ENCODE measurements at regions of chr12 and their contacts with region 1.

Region 1: GRCh38 chr12:39237004-39237403 is 205.9 kb downstream of the KIF21A start:
- DNase-seq: peak in 1 of 2 experiments; percentile 49
- H3K4me3 ChIP-seq: no peak overlapping the region
- H3K4me3 Mint-ChIP-seq: no peak overlapping the region
- H3K27ac Mint-ChIP-seq: no peak overlapping the region
- H3K4me1 ChIP-seq: peaks cover 52% of the 10 kb centered on the region
- H3K4me1 Mint-ChIP-seq: peaks cover 29% of the 10 kb centered on the region
- H3K27me3 ChIP-seq: no peaks in the 10 kb centered on the region
- H3K27me3 Mint-ChIP-seq: no peaks in the 10 kb centered on the region
- CTCF ChIP-seq: no peak

Region 2: DNA sequence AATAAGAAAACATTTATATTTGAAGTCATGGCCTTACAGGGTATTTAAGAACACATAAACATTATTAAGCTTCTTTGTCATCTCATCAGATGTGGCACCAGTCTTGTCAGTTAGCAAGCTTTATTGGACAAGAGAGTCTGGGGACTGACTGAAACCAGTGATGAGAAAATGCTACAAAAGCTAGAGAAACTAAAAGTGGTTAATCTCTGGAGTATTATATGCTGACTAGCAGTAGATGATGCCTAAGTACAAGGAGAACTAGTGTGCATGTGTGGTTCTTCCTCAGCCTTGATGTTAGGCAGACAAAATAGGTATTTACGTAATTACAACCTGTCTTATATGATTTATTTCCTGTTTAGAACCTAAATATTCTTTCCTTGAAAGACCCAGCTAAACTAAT is 508.1 kb before region 1 on chr12:
- CTCF ChIA-PET with region 1: no interaction called
- POLR2A ChIA-PET with region 1: no interaction called
- intact Hi-C with region 1: no loop called
- DNase-seq: no peak
- H3K4me3 ChIP-seq: no peak overlapping the region
- H3K4me3 Mint-ChIP-seq: no peak overlapping the region
- H3K27ac Mint-ChIP-seq: no peak overlapping the region
- H3K4me1 ChIP-seq: no peaks in the 10 kb centered on the region
- H3K4me1 Mint-ChIP-seq: no peaks in the 10 kb centered on the region
- H3K27me3 ChIP-seq: no peaks in the 10 kb centered on the region
- H3K27me3 Mint-ChIP-seq: no peaks in the 10 kb centered on the region
- CTCF ChIP-seq: no peak

Region 3: GRCh38 chr12:38892090-38892786 is 344.8 kb before region 1 on chr12:
- CTCF ChIA-PET with region 1: no interaction called
- POLR2A ChIA-PET with region 1: no interaction called
- intact Hi-C with region 1: loop called (anchors 5 kb)
- DNase-seq: peak; percentile 89 to 94
- H3K4me3 ChIP-seq: no peak overlapping the region
- H3K4me3 Mint-ChIP-seq: peak overlapping the region; percentile 74
- H3K27ac Mint-ChIP-seq: peak overlapping the region; percentile 97
- H3K4me1 ChIP-seq: peaks cover 40% of the 10 kb centered on the region
- H3K4me1 Mint-ChIP-seq: peaks cover 41% of the 10 kb centered on the region
- H3K27me3 ChIP-seq: no peaks in the 10 kb centered on the region
- H3K27me3 Mint-ChIP-seq: no peaks in the 10 kb centered on the region
- CTCF ChIP-seq: no peak

Region 4: GRCh38 chr12:39122562-39123204 is 114.3 kb before region 1 on chr12:
- CTCF ChIA-PET with region 1: no interaction called
- POLR2A ChIA-PET with region 1: no interaction called
- intact Hi-C with region 1: loop called (anchors 1 kb)
- DNase-seq: peak; percentile 56 to 77
- H3K4me3 ChIP-seq: no peak overlapping the region
- H3K4me3 Mint-ChIP-seq: no peak overlapping the region
- H3K27ac Mint-ChIP-seq: peak overlapping the region; percentile 53
- H3K4me1 ChIP-seq: peaks cover 46% of the 10 kb centered on the region
- H3K4me1 Mint-ChIP-seq: peaks cover 29% of the 10 kb centered on the region
- H3K27me3 ChIP-seq: no peaks in the 10 kb centered on the region
- H3K27me3 Mint-ChIP-seq: no peaks in the 10 kb centered on the region
- CTCF ChIP-seq: no peak

Region 5: GRCh38 chr12:39341179-39341578 is 104.2 kb after region 1 on chr12:
- CTCF ChIA-PET with region 1: no interaction called
- POLR2A ChIA-PET with region 1: no interaction called
- intact Hi-C with region 1: no loop called
- DNase-seq: no peak
- H3K4me3 ChIP-seq: no peak overlapping the region
- H3K4me3 Mint-ChIP-seq: no peak overlapping the region
- H3K27ac Mint-ChIP-seq: no peak overlapping the region
- H3K4me1 ChIP-seq: no peaks in the 10 kb centered on the region
- H3K4me1 Mint-ChIP-seq: no peaks in the 10 kb centered on the region
- H3K27me3 ChIP-seq: no peaks in the 10 kb centered on the region
- H3K27me3 Mint-ChIP-seq: no peaks in the 10 kb centered on the region
- CTCF ChIP-seq: no peak

Measured in Caco-2 (cell line).